AG04449 (cell line): ENCODE measurements at regions of chr17 and their contacts with region 1.

Region 1: DNA sequence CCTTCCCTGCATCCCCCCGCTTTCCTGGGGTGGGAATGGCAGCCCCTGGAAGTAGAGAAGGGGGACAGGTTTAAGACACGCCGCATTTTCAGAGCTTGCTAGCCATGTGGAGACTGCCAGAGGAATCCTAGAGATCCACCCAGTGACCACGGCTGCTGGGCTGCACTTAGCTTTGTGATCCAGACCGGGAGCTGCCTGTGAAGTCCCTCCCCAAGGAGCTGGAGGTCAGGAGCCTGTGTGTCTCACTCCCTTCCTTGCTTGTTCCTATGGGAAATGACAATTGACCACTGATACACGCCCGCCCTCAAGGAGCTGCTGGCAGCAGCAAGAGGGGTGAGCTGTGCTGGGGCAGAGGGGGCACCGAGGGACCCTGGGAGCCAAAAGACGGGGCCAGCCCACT is 73.7 kb downstream of the SREBF1 start:
- DNase-seq: no peak
- H3K4me3 ChIP-seq: no peak overlapping the region
- CTCF ChIP-seq: no peak

Region 2: GRCh38 chr17:17781591-17782496 is 18.7 kb after region 1 on chr17:
- CTCF ChIA-PET with region 1: interaction called, 11 read pairs
- POLR2A ChIA-PET with region 1: no interaction called
- DNase-seq: no peak
- H3K4me3 ChIP-seq: peak overlapping the region; percentile 43
- CTCF ChIP-seq: no peak